Activated B cell treated with CpG ODN at 0.5 μM for 24 hours (primary cell): ENCODE measurements at regions of chr7 and their contacts with region 1.

Region 1: DNA sequence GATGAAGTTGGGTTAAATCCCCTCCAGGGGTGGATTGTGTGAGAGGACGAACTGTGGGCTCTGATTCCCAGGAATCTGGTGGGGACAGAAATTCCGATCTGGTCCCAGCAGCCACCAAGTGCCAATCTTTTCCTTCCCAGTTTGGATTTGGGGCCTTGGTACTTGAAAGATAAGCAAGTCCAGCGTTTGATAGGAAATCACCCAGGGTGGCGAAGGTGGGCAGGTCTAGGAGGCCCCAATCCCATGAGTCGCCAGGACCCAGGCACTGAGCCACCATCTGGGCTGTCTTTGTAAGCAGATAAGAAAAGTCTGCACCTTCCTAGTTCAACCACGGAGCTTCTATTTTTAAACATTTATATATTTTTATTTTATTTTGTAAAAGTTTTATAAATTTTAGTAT is 122.6 kb upstream of the LSM8 start:
- DNase-seq: no peak
- ATAC-seq: no peak
- H3K4me3 Mint-ChIP-seq: no peak overlapping the region
- H3K27ac Mint-ChIP-seq: no peak overlapping the region
- H3K4me1 Mint-ChIP-seq: no peaks in the 10 kb centered on the region
- H3K27me3 Mint-ChIP-seq: no peaks in the 10 kb centered on the region
- CTCF ChIP-seq: no peak

Region 2: DNA sequence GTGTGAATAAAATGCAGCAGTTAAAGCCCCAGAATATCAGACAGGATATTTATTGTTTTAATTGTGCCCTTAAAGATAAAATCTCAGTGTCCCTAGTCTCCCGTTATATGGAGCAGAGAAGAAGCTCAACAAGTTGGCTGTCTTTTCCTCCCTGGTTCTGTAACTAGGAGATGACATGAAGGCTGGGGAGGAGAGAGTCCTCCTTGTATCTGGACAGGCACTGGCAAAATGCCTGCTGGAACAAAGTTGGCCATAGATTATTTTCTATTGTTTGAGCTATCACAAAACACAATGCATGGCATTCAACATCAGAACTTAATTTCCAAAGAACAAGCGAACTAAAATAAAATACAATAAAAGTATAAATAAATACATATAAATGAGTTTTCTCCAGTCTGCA is 1516.7 kb after region 1 on chr7:
- CTCF ChIA-PET with region 1: no interaction called
- POLR2A ChIA-PET with region 1: no interaction called
- intact Hi-C with region 1: loop called (anchors 10 kb)
- DNase-seq: no peak
- ATAC-seq: no peak
- H3K4me3 Mint-ChIP-seq: no peak overlapping the region
- H3K27ac Mint-ChIP-seq: no peak overlapping the region
- H3K4me1 Mint-ChIP-seq: no peaks in the 10 kb centered on the region
- H3K27me3 Mint-ChIP-seq: no peaks in the 10 kb centered on the region
- CTCF ChIP-seq: no peak